ENCODE measurements at regions of chr3 and their contacts with region 1.

Region 1: DNA sequence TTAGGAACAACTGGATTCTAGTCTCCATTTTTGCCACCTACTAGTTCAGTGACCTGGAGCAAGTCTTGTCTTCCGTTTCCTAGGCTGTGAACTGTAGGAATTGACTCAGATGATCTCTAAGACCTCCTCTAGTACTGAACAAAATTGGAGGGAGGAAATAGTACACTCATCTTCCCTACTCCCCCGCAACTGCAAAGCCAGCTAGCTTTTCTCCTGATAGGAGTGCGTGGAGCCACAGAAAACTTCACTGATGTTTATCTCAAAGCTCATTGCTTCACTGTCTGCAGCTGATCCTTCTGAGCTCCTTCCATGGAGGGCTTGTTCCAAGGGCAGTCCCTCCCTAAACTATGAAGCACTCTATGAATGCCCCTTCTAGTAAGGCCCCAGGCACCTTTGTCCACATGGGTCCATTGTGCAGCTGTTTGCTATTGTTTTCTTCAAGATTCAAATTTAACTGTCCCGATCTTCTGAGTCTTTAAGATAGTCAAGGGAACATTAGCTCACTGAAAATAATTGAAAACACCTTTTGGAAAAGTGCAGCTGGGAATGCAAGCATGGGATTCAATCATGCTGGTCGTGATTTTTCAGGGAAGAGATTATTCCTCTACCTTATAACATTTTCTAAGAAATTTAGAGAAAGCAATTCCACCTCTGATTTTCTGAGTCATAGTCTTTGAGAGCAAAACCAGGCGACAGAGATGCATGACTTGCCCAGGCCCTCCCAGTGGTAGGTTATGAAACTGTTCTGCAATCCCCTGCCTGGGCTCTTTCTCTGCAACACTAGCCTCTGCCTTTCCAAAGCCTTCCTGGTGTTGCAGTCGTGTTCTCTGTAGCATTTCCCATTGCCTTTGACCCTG is 24.3 kb downstream of the FILIP1L start:
- DNase-seq: peak; percentile 51
- H3K4me3 Mint-ChIP-seq: no peak overlapping the region
- H3K27ac Mint-ChIP-seq: no peak overlapping the region
- H3K4me1 Mint-ChIP-seq: peaks cover 33% of the 10 kb centered on the region
- H3K27me3 Mint-ChIP-seq: no peaks in the 10 kb centered on the region

Region 2: GRCh38 chr3:99833617-99834205 is 256.3 kb before region 1 on chr3:
- CTCF ChIA-PET with region 1: interaction called, 12 read pairs
- DNase-seq: no peak
- H3K4me3 Mint-ChIP-seq: no peak overlapping the region
- H3K27ac Mint-ChIP-seq: no peak overlapping the region
- H3K4me1 Mint-ChIP-seq: no peaks in the 10 kb centered on the region
- H3K27me3 Mint-ChIP-seq: no peaks in the 10 kb centered on the region

Region 3: GRCh38 chr3:99842826-99843589 is 247.0 kb before region 1 on chr3:
- CTCF ChIA-PET with region 1: interaction called, 16 read pairs
- DNase-seq: no peak
- H3K4me3 Mint-ChIP-seq: no peak overlapping the region
- H3K27ac Mint-ChIP-seq: no peak overlapping the region
- H3K4me1 Mint-ChIP-seq: no peaks in the 10 kb centered on the region
- H3K27me3 Mint-ChIP-seq: no peaks in the 10 kb centered on the region

Region 4: DNA sequence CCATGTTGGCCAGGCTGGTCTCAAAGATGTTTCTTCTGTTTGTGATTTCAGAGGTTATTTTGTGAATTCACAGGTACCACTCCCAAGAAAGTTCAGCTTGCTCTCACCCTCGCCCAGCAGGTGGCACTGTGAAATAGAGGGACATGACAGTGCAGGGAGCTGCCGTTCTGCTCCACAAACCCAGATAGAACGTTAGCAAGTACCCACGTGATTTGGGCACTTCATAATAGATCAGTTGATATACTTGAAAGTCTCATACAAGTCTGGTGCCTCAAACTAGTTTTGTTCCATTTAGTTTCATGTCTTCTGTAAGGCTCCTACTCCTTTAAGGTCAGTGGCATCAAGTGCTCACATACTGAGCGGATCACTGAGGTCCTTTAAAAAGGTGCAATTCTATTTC is 21.2 kb before region 1 on chr3:
- CTCF ChIA-PET with region 1: interaction called, 29 read pairs
- DNase-seq: peak; percentile 91
- H3K4me3 Mint-ChIP-seq: no peak overlapping the region
- H3K27ac Mint-ChIP-seq: peak overlapping the region; percentile 13
- H3K4me1 Mint-ChIP-seq: peaks cover 58% of the 10 kb centered on the region
- H3K27me3 Mint-ChIP-seq: no peaks in the 10 kb centered on the region

Region 5: GRCh38 chr3:100073899-100074307 is 16.1 kb before region 1 on chr3:
- CTCF ChIA-PET with region 1: interaction called, 29 read pairs
- DNase-seq: peak; percentile 41
- H3K4me3 Mint-ChIP-seq: peak overlapping the region; percentile 47
- H3K27ac Mint-ChIP-seq: peak overlapping the region; percentile 88
- H3K4me1 Mint-ChIP-seq: peaks cover 82% of the 10 kb centered on the region
- H3K27me3 Mint-ChIP-seq: no peaks in the 10 kb centered on the region

Region 6: GRCh38 chr3:100103558-100104441 is 13.8 kb after region 1 on chr3:
- CTCF ChIA-PET with region 1: interaction called, 18 read pairs
- DNase-seq: no peak
- H3K4me3 Mint-ChIP-seq: no peak overlapping the region
- H3K27ac Mint-ChIP-seq: peak overlapping the region; percentile 26
- H3K4me1 Mint-ChIP-seq: peaks cover 28% of the 10 kb centered on the region
- H3K27me3 Mint-ChIP-seq: no peaks in the 10 kb centered on the region

Region 7: GRCh38 chr3:100144251-100144866 is 54.3 kb after region 1 on chr3:
- CTCF ChIA-PET with region 1: no interaction called
- DNase-seq: no peak
- H3K4me3 Mint-ChIP-seq: no peak overlapping the region
- H3K27ac Mint-ChIP-seq: peak overlapping the region; percentile 60
- H3K4me1 Mint-ChIP-seq: peaks cover 16% of the 10 kb centered on the region
- H3K27me3 Mint-ChIP-seq: no peaks in the 10 kb centered on the region

Region 8: DNA sequence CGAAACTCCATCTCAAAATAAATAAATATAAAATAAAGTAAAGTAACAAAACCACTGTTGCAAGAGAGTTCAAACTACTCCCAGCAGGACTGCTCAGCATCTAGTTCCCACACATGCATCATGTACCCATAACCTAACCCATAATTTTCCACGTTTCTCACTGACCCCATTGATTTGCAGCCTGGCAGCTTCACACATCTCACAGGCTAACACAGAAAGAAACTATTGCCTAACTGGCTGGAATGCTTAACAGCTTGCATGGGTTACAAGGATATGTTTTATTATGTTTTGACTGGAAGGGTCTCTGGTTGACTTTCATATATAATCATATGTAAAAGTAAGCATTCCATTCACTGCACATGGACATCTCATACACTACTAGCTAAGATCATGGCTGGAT is 115.1 kb after region 1 on chr3:
- CTCF ChIA-PET with region 1: no interaction called
- DNase-seq: no peak
- H3K4me3 Mint-ChIP-seq: no peak overlapping the region
- H3K27ac Mint-ChIP-seq: no peak overlapping the region
- H3K4me1 Mint-ChIP-seq: peaks cover 17% of the 10 kb centered on the region
- H3K27me3 Mint-ChIP-seq: peaks cover 12% of the 10 kb centered on the region

Region 9: GRCh38 chr3:100254168-100254777 is 164.2 kb after region 1 on chr3:
- CTCF ChIA-PET with region 1: interaction called, 11 read pairs
- DNase-seq: peak; percentile 69
- H3K4me3 Mint-ChIP-seq: no peak overlapping the region
- H3K27ac Mint-ChIP-seq: no peak overlapping the region
- H3K4me1 Mint-ChIP-seq: peaks cover 14% of the 10 kb centered on the region
- H3K27me3 Mint-ChIP-seq: peaks cover 4% of the 10 kb centered on the region